ENCODE measurements at regions of chr10 and their contacts with region 1.

Region 1: DNA sequence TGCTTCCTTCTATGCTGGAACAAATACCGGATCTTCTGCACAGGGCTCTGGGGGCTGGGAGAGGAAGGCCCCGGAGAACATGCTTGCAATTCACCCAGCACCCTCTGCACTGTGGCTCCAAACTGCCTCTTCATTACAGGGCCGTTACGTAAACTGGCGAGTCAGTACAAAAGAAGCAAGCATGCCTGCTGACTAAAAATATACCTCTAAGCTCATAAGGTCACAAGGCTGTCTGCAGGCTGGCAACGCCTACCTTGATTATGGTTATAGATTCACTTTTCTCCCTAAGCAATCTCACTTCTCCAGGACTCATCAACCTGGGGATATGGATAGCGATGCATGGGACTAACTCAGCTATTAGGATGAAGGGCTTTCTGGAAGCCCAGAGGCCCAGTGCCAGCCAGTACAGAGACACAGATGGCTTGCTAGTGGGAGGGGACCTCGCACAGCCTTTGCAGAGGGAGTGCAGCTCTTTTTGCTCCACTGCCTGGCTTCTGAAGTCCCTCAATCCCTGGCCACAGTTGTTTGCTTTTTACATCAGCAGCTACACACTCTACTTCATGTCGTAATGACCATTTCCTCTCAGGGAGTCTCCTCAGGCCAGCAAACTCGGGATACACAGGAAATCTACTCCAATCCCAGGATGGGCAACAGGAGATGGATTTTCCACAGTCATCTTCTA is 96.1 kb downstream of the SH3PXD2A start:
- DNase-seq: peak in 5 of 14 experiments; percentile 16 to 47 (median 39)
- ATAC-seq: peak; percentile 76
- H3K4me3 ChIP-seq: no peak overlapping the region
- H3K4me3 Mint-ChIP-seq: peak overlapping the region; percentile 25
- H3K27ac ChIP-seq: peak overlapping the region in 1 of 2 donors; percentile 19
- H3K27ac Mint-ChIP-seq: peak overlapping the region; percentile 72
- H3K4me1 ChIP-seq: peaks cover 63% of the 10 kb centered on the region
- H3K4me1 Mint-ChIP-seq: peaks cover 66% of the 10 kb centered on the region
- H3K27me3 ChIP-seq: no peaks in the 10 kb centered on the region
- H3K27me3 Mint-ChIP-seq: no peaks in the 10 kb centered on the region
- CTCF ChIP-seq: no peak

Region 2: GRCh38 chr10:103772096-103772845 is 13.0 kb after region 1 on chr10:
- CTCF ChIA-PET with region 1: no interaction called
- POLR2A ChIA-PET with region 1: interaction called, 14 read pairs
- intact Hi-C with region 1: no loop called
- DNase-seq: peak in 13 of 14 experiments; percentile 28 to 80 (median 54)
- ATAC-seq: peak; percentile 83
- H3K4me3 ChIP-seq: peak overlapping the region; percentile 79
- H3K4me3 Mint-ChIP-seq: peak overlapping the region; percentile 92
- H3K27ac ChIP-seq: peak overlapping the region; percentile 37 to 83
- H3K27ac Mint-ChIP-seq: peak overlapping the region; percentile 86
- H3K4me1 ChIP-seq: peaks cover 41% of the 10 kb centered on the region
- H3K4me1 Mint-ChIP-seq: peaks cover 43% of the 10 kb centered on the region
- H3K27me3 ChIP-seq: no peaks in the 10 kb centered on the region
- H3K27me3 Mint-ChIP-seq: no peaks in the 10 kb centered on the region
- CTCF ChIP-seq: no peak